Aorta (tissue), 5 donors: ENCODE measurements at regions of chr21 and their contacts with region 1.

Region 1: DNA sequence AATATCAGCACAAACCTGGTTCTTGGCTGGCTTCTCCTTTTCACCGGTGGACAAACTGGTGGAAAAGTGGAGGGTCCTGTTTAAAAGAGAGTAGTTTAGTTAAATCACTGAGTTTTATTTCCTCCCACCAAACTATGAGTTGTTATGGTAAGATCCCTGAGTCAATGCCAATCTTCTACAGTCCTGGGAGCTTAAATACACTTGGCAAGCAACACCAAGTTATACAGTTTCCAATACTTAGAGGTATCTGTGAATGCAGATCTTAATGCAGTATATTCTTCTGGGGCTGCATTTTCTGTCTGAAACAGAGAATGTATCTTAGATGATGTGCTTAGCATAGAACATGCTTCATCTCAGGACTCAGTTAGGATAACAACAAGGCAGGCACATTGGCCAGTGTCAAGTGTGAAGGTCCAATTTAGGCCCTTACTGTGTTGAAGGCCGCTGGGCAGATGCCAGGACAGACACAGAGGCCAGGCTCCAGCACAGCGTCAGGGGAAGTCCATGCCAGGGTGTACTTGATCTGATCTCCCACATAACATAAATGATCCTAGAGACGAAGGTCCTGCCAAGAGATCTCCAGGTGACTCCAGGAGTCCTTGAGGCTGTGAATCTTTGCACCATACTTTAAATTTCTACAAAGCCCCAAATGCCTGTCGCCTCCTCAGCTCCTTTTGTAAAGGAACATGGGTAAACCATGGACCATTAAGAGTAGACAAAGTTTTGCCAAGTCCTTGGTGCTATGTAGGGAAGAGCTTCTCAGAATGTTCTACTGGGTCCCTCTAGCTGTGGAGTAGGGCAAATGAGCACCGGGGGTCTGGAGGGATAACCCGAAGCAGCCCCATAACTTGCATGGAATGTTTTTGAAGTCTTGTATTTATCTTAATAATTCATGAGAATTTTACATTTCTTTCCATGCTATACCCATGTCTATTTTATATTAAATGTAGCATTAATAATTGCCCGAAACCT is 76.8 kb downstream of the KCNJ15 start:
- DNase-seq: no peak
- ATAC-seq: peak; percentile 52
- H3K4me3 ChIP-seq: no peak overlapping the region
- H3K27ac ChIP-seq: no peak overlapping the region
- H3K4me1 ChIP-seq: no peaks in the 10 kb centered on the region
- H3K27me3 ChIP-seq: no peaks in the 10 kb centered on the region

Region 2: DNA sequence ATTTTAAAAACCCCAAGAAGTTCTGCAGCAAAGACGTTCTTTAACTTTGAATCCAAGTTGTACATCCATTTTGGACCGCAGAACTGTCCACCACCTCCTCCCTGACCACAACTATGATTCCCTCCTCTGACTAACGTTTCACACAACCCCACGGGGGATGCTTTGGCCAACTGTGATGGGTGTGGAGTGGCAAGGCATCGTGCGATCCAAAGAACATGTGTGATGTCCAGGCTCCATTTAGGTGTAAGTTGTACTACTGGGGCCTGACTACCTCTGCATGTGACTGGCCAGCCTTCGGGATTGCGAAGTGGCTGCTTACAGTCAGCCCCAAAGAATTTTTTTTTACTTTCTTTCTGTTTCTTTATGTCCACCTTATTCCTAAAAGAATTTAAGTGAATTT is 70.1 kb before region 1 on chr21:
- intact Hi-C with region 1: loop called in 1 of 2 experiments (anchors 5 kb)
- DNase-seq: peak in 1 of 2 donors; percentile 57
- ATAC-seq: no peak
- H3K4me3 ChIP-seq: no peak overlapping the region
- H3K27ac ChIP-seq: no peak overlapping the region
- H3K4me1 ChIP-seq: peaks cover 2 to 6% of the 10 kb centered on the region in 2 donors
- H3K27me3 ChIP-seq: no peaks in the 10 kb centered on the region